Endothelial cell of umbilical vein (primary cell): ENCODE measurements at regions of chr11 and their contacts with region 1.

Region 1: DNA sequence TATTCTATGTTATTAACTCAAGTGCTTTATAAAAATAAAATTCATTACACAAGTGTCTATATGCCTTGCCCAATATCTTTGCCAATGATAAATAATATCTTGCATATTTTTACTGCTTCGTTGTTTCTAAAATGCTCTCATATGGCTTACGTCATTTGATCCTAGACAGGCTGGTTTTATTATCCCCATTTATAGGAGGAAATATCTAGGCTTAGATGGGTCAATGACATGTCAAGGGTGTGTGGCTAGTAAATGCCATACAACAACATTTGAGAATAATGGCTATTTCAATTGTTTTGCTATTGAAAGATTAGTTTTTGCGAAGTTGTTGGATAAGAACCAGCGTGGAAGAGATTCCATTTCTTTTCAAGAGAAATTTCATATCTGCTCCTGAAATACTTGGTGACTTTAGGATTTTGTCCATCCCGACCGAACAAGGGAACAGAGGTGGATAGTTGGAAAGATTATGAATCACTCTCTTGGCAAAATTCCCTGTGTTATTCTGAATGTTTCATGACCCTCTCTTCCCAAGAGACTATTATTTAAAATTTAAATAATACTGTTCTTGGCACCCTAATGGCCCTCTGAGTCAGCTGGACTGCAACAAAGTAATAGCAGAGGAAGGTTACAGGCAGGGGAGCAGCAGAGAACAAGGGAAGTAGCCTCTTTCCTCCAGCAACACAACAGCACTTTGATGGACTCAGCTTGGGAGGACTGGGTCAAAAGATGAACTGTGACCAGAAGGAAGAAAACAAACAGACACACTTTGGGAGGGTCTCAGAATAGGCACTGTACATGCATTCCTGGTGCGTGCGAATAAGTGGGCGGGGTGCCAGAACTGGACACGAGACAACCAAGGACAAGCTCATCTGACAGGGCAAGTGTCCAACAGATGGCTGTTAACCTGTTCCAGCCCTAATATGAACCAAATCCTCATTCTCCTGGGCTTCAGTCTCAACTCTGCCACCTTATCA is 94.5 kb downstream of the ME3 start:
- DNase-seq: peak; percentile 98
- H3K4me3 ChIP-seq: no peak overlapping the region
- H3K27ac ChIP-seq: peak overlapping the region; percentile 63
- H3K4me1 ChIP-seq: peaks cover 59% of the 10 kb centered on the region
- H3K27me3 ChIP-seq: no peaks in the 10 kb centered on the region
- CTCF ChIP-seq: no peak
- POLR2A ChIP-seq: no peak

Region 2: DNA sequence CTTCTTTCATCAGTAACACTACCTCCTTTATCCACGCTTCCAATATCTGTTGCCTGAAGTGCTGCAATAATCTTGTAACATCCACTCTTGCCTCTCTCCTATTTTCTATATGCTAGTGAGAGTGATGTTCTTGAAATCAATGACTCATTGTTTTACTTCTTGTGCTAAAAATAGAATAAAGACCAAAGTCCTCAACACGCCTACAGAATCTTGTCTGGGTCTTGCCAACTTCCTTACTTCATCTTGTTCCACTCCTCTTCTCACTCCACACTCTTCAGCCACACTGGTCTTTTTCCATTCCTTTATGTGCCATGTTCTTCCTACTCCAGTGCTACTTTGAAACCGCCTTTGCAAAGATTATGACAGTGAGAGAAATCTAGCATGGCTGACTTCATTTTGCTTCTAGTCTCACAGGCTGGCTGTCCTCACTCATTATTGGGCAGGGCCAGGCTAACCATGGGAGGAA is 66.8 kb before region 1 on chr11:
- CTCF ChIA-PET with region 1: no interaction called
- POLR2A ChIA-PET with region 1: no interaction called
- dilution Hi-C with region 1: no loop called
- intact Hi-C with region 1: loop called (anchors 2 kb)
- DNase-seq: peak; percentile 61
- H3K4me3 ChIP-seq: no peak overlapping the region
- H3K27ac ChIP-seq: no peak overlapping the region
- H3K4me1 ChIP-seq: peaks cover 31% of the 10 kb centered on the region
- H3K27me3 ChIP-seq: no peaks in the 10 kb centered on the region
- CTCF ChIP-seq: no peak
- POLR2A ChIP-seq: no peak

Region 3: GRCh38 chr11:86551286-86552092 is 26.5 kb before region 1 on chr11:
- CTCF ChIA-PET with region 1: interaction called, 3 read pairs
- POLR2A ChIA-PET with region 1: no interaction called
- dilution Hi-C with region 1: no loop called
- intact Hi-C with region 1: loop called (anchors 1 kb)
- DNase-seq: peak; percentile 96
- H3K4me3 ChIP-seq: no peak overlapping the region
- H3K27ac ChIP-seq: peak overlapping the region; percentile 71
- H3K4me1 ChIP-seq: peaks cover 44% of the 10 kb centered on the region
- H3K27me3 ChIP-seq: no peaks in the 10 kb centered on the region
- CTCF ChIP-seq: no peak
- POLR2A ChIP-seq: no peak

Region 4: DNA sequence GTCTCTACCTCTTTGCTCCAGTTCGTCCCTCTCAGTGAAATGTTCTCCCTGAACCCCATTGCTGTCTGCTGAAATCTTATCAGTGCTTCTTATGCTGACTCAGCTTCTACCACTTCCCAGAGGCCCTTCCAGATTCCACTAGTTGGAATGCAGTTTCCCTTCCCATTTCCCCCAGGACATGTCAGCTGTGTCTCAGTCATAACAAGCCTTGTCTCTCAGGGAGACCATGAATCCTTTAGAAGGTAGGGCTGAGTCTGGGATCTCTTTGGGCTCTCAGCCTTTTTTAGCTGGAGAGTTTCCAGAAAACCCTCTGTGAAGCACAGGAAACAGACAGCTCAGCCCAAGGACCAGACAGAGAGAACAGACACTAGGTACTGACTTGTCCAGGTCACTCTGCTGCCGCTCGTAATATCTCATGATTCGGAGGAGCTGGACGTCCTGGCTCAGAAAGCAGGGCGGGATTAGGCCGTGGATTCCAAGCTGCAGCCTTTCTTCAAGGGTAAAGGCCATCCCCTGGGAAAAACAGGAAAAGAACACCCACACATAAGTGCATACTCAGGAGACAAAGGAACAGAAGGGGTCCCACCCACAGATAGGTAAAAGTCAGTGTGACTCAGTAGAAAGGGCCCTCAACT is 18.5 kb before region 1 on chr11:
- CTCF ChIA-PET with region 1: interaction called, 12 read pairs
- POLR2A ChIA-PET with region 1: no interaction called
- dilution Hi-C with region 1: no loop called
- intact Hi-C with region 1: no loop called
- DNase-seq: peak; percentile 79
- H3K4me3 ChIP-seq: no peak overlapping the region
- H3K27ac ChIP-seq: peak overlapping the region; percentile 44
- H3K4me1 ChIP-seq: peaks cover 16% of the 10 kb centered on the region
- H3K27me3 ChIP-seq: no peaks in the 10 kb centered on the region
- CTCF ChIP-seq: no peak
- POLR2A ChIP-seq: no peak

Region 5: DNA sequence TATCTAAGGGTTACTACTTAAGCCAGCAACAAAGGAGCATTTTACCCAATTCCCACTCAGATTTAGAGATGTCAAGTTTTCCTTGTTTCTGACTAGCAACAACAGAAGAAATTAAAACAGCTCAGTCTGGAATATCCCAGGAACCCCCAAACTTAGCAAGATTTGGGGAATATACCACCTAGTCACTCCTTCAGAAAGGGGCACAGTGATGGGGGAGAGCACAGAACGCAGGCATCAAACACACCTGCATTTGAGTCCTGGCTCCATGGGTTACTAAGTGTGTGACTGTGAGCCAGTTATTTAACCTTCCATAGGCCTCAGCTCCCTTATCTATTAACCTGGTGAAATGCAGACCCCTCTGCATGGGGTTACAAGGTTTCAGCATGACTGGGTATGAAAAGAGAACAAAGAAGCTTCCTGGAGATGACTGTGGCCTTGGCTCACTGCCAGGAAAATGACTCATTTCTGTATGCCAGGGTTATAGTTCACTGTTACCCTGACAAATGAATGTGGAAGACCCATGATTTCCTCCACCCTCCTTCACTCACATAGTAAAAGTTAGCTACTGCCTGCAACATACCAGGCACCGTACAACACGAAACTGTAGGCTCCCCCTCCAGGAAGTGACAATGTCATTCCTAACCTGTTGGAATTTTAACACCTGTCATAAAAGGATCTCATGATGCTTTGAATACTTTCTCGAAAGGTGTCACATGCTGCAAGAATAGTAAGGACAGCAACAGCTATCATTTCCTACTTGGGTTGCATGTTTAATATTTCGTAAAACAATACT is 14.9 kb after region 1 on chr11:
- CTCF ChIA-PET with region 1: interaction called, 5 read pairs
- POLR2A ChIA-PET with region 1: interaction called, 3 read pairs
- dilution Hi-C with region 1: no loop called
- intact Hi-C with region 1: loop called (anchors 1 kb)
- DNase-seq: peak; percentile 99
- H3K4me3 ChIP-seq: no peak overlapping the region
- H3K27ac ChIP-seq: peak overlapping the region; percentile 99
- H3K4me1 ChIP-seq: peaks cover 60% of the 10 kb centered on the region
- H3K27me3 ChIP-seq: no peaks in the 10 kb centered on the region
- CTCF ChIP-seq: no peak
- POLR2A ChIP-seq: peak; percentile 12

Region 6: GRCh38 chr11:86769219-86769618 is 191.3 kb after region 1 on chr11:
- CTCF ChIA-PET with region 1: no interaction called
- POLR2A ChIA-PET with region 1: no interaction called
- dilution Hi-C with region 1: no loop called
- intact Hi-C with region 1: no loop called
- DNase-seq: no peak
- H3K4me3 ChIP-seq: no peak overlapping the region
- H3K27ac ChIP-seq: no peak overlapping the region
- H3K4me1 ChIP-seq: no peaks in the 10 kb centered on the region
- H3K27me3 ChIP-seq: no peaks in the 10 kb centered on the region
- CTCF ChIP-seq: no peak
- POLR2A ChIP-seq: no peak

Region 7: DNA sequence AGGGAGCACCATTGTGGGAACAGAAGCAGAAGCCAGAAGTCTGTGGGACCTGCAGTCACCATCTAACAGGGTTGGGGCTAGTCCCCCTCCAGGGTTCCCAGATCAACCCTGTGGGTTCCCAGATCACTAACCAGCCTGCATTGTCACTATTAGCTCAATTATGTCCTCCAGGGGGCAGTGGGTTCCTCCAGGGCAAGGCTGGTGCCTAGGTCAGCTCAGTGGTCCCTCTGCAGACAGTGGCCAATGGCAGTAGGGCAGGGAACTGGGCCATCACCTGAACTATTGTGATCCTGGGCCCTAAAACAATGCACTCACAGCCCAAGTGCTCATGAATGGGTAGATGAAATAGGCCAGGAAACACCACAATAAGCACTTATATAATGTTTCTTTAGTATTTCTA is 203.6 kb after region 1 on chr11:
- CTCF ChIA-PET with region 1: no interaction called
- POLR2A ChIA-PET with region 1: no interaction called
- dilution Hi-C with region 1: no loop called
- intact Hi-C with region 1: no loop called
- DNase-seq: no peak
- H3K4me3 ChIP-seq: no peak overlapping the region
- H3K27ac ChIP-seq: no peak overlapping the region
- H3K4me1 ChIP-seq: no peaks in the 10 kb centered on the region
- H3K27me3 ChIP-seq: no peaks in the 10 kb centered on the region
- CTCF ChIP-seq: no peak
- POLR2A ChIP-seq: no peak